ENCODE measurements at regions of chr4 and their contacts with region 1.

Region 1: GRCh38 chr4:82268050-82268825 is 105.6 kb downstream of the HNRNPD start:
- DNase-seq: peak; percentile 29
- ATAC-seq: peak; percentile 99
- H3K4me3 ChIP-seq: no peak overlapping the region
- H3K27ac ChIP-seq: no peak overlapping the region
- H3K4me1 ChIP-seq: no peaks in the 10 kb centered on the region
- H3K27me3 ChIP-seq: peaks cover 25% of the 10 kb centered on the region
- CTCF ChIP-seq: peak; percentile 53 to 85 (median 82); a peak in 5 of 6 replicates
- POLR2A ChIP-seq: no peak
- RAD21 ChIP-seq: peak; percentile 79

Region 2: GRCh38 chr4:81405894-81406401 is 862.3 kb before region 1 on chr4:
- CTCF ChIA-PET with region 1: no interaction called
- POLR2A ChIA-PET with region 1: no interaction called
- RAD21 ChIA-PET with region 1: no interaction called
- intact Hi-C with region 1: loop called (anchors 1 kb)
- DNase-seq: peak; percentile 68
- ATAC-seq: peak; percentile 84
- H3K4me3 ChIP-seq: no peak overlapping the region
- H3K27ac ChIP-seq: no peak overlapping the region
- H3K4me1 ChIP-seq: no peaks in the 10 kb centered on the region
- H3K27me3 ChIP-seq: peaks cover 26% of the 10 kb centered on the region
- CTCF ChIP-seq: peak; percentile 47 to 98 (median 73)
- POLR2A ChIP-seq: no peak
- RAD21 ChIP-seq: peak; percentile 72

Region 3: DNA sequence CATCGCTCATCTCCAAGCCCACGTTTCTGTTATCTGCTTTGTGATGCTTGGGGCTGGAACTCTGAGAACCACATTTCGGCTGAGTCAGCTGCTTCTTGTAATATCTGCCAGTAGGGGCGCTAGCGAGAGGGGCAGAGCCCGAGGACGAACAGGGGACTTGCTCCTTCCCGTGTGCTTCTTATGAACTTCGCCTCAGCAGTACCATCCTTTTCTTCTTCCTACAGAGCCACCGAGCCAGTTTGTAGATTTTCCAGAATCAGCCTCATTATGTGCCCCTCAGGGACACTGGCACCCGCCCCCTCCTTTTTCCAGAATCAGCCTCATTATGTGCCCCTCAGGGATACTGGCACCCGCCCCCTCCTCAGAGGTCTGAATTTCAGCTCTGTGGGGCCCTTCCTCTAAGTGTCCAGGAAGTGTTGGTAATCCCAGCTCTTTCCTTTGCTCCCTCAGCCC is 354.8 kb before region 1 on chr4:
- CTCF ChIA-PET with region 1: no interaction called
- POLR2A ChIA-PET with region 1: no interaction called
- RAD21 ChIA-PET with region 1: no interaction called
- intact Hi-C with region 1: loop called (anchors 10 kb)
- DNase-seq: peak; percentile 49
- ATAC-seq: peak; percentile 93
- H3K4me3 ChIP-seq: no peak overlapping the region
- H3K27ac ChIP-seq: no peak overlapping the region
- H3K4me1 ChIP-seq: no peaks in the 10 kb centered on the region
- H3K27me3 ChIP-seq: peaks cover 18% of the 10 kb centered on the region
- CTCF ChIP-seq: peak; percentile 35 to 84 (median 83); a peak in 5 of 6 replicates
- POLR2A ChIP-seq: no peak
- RAD21 ChIP-seq: peak; percentile 33

Region 4: GRCh38 chr4:82284858-82285805 is 16.9 kb after region 1 on chr4:
- CTCF ChIA-PET with region 1: interaction called, 14 read pairs
- POLR2A ChIA-PET with region 1: no interaction called
- RAD21 ChIA-PET with region 1: no interaction called
- intact Hi-C with region 1: no loop called
- DNase-seq: peak; percentile 96
- ATAC-seq: peak; percentile 99
- H3K4me3 ChIP-seq: peak overlapping the region; percentile 24 to 46
- H3K27ac ChIP-seq: no peak overlapping the region
- H3K4me1 ChIP-seq: peaks cover 0 to 12% of the 10 kb centered on the region in 2 experiments; a peak in 2 of 4 replicates
- H3K27me3 ChIP-seq: peaks cover 6% of the 10 kb centered on the region; the same call in 1 of the 2 replicates
- CTCF ChIP-seq: peak; percentile 31 to 89 (median 82); a peak in 4 of 6 replicates
- POLR2A ChIP-seq: no peak
- RAD21 ChIP-seq: peak; percentile 34; the same call in 1 of the 2 replicates

Measured in HCT116 (cell line).